Ascending aorta (tissue), 2 donors: ENCODE measurements at regions of chr3 and their contacts with region 1.

Region 1: GRCh38 chr3:33131331-33132018 is 17.7 kb downstream of the CRTAP start:
- DNase-seq: no peak
- H3K4me3 ChIP-seq: no peak overlapping the region
- H3K27ac ChIP-seq: peak overlapping the region; percentile 21 to 43
- H3K4me1 ChIP-seq: peaks cover 0 to 11% of the 10 kb centered on the region in 2 donors
- H3K27me3 ChIP-seq: no peaks in the 10 kb centered on the region
- CTCF ChIP-seq: peak; percentile 71 to 78 (median 75)

Region 2: DNA sequence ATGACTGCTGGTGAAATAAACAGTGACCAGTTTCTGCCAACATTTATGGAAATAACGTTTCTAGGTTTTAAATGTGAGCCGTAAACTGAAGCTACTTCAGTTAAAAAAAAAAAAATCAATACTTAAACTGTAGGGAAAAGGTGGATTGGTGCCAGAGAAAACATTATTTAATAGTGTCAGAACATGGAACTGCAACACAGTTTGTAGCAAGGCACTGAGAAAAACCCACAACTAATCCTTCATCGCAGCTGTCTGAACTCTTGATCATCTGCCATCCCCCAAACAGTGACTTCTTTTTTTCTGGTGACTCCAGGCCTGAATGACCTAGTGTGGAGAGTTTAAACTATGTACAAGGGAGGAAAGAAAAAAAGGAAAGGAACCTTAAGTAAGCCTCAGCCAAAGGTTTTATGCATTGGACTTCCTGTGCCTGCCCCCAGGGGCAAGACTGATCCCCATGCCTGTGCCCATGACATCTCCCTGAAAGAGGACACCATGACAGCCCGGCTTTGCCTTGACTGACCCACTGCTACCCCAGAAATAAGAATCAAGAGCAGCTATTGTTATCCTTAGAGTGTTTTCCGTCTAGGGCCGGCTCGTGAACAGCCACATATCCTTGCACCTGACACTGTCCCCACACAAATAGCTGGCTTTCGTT is 15.4 kb after region 1 on chr3:
- intact Hi-C with region 1: loop called (anchors 2 kb)
- DNase-seq: no peak
- H3K4me3 ChIP-seq: no peak overlapping the region
- H3K27ac ChIP-seq: peak overlapping the region; percentile 70 to 87
- H3K4me1 ChIP-seq: peaks cover 7 to 43% of the 10 kb centered on the region in 2 donors
- H3K27me3 ChIP-seq: no peaks in the 10 kb centered on the region
- CTCF ChIP-seq: peak in 1 of 3 experiments; percentile 12

Region 3: DNA sequence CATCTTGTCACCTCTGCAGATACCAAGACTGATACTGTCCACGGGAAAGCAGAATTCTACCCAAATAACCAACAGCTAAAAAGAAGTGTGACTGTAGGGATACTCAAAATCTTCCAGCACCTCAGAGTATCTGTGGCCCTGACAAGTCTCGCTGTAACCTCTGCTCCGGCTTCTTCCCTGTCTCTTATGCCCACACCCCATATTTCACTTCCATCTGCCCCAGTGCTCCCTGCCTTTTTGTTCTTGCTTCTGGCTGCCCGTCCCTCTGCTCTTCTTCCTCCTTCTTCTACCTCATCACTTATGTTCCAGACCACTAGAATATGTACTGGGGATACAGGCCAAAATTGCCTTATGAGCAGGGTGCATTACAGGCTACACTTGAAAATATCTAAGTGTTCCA is 27.8 kb after region 1 on chr3:
- intact Hi-C with region 1: no loop called
- DNase-seq: no peak
- H3K4me3 ChIP-seq: no peak overlapping the region
- H3K27ac ChIP-seq: peak overlapping the region; percentile 12 to 53
- H3K4me1 ChIP-seq: peaks cover 0 to 18% of the 10 kb centered on the region in 2 donors
- H3K27me3 ChIP-seq: no peaks in the 10 kb centered on the region
- CTCF ChIP-seq: no peak

Region 4: DNA sequence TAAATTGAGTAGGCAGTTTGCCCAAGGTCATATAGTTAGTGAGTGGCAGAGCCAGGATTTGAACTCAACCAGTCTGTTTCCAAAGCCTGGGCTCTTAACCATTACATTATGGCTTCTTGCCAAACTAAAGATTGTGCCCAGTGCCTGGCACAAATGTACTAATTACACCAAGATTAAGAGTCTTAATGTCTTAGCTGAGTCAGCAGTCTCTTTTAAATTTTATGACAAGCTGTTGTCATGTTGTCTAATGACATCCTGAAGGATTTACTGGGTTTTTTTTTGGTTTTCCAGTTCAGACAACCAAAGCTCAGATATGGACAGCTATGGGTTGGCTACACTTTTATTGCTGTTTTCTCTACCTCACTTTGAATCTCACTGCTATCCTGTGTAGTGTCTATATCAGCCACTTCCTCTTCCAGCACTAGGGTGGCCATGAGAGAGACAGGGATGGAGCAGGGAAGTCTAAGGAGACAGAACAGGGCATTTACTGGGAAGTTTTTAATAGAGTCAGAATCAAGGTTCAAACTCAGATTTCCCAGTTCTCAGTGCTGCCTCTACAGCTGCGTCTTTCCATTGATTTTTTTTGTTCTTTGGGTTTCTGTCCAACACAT is 156.3 kb after region 1 on chr3:
- intact Hi-C with region 1: no loop called
- DNase-seq: no peak
- H3K4me3 ChIP-seq: no peak overlapping the region
- H3K27ac ChIP-seq: no peak overlapping the region
- H3K4me1 ChIP-seq: no peaks in the 10 kb centered on the region
- H3K27me3 ChIP-seq: no peaks in the 10 kb centered on the region
- CTCF ChIP-seq: no peak

Region 5: DNA sequence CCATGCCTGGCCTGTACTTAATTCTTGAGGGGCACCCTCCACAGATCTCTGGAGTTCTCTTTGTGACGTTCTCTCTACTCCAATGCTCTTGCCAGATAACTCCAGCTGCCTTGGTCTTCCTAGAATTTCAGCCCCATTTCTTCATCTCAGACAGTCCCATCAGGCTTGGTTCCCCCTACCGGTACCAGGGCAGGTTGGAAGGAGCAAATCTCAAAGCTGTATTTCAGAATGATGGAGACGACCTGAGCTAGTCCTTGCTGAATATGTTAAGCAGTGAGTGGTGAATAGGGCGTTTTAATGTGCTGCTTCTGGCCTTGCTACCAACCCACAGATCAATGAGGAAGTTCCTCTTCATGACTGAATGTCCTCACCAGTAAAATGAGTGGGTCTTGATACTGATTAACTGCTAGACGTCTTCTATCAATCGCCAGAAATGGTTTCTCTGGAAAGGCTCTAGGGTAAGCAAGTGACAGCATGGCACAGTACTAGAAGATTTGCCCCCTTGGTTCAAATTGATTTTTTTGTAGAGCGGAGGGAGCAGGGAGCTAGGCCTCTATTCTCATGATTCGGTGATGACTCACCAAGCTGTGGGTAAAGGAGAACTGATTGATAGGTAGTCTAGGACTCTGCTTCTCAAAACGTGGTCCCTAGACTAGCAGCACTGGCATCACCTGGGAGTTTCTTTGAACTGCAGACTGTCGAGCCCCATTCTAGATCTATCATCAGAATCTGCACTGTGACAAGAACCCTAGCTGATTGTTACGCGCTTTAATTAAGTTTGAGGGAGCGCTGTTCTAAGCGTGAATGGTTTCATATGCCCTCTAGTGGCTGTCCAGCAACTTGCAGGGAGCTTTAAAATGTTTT is 241.0 kb after region 1 on chr3:
- intact Hi-C with region 1: loop called (anchors 1 kb)
- DNase-seq: no peak
- H3K4me3 ChIP-seq: peak overlapping the region in 1 of 2 donors; percentile 19
- H3K27ac ChIP-seq: peak overlapping the region in 1 of 2 donors; percentile 49
- H3K4me1 ChIP-seq: no peaks in the 10 kb centered on the region
- H3K27me3 ChIP-seq: no peaks in the 10 kb centered on the region
- CTCF ChIP-seq: peak; percentile 86 to 91 (median 90)